Pancreas (tissue), 10 donors: ENCODE measurements at regions of chr6 and their contacts with region 1.

Region 1: DNA sequence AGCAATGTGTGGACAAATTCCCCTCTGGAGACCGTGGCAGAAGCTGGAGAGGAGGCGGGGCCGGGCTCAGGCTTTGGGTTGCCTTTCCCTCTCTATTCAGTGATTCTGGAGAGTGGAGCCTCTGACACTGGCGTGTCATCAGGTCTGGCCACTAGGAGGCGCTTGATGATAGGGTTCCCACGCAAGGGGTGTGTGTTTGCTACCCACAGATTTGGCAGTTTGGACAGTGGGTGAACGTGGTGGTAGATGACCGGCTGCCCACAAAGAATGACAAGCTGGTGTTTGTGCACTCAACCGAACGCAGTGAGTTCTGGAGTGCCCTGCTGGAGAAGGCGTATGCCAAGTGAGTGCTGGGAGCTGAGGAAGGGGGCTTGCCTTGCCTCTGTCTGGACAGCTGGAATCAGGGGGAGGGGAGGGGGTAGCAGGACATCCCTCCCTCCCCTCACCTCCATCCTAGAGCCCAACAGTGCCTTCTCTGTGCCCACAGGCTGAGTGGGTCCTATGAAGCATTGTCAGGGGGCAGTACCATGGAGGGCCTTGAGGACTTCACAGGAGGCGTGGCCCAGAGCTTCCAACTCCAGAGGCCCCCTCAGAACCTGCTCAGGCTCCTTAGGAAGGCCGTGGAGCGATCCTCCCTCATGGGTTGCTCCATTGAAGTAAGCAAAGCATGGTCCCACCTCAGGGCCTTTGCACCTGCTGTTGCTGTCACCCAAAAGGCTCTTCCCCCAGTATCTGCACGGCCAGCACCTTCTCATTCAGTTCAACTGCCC is 14.3 kb downstream of the CAPN11 start:
- DNase-seq: peak; percentile 74 to 91 (median 86)
- ATAC-seq: peak; percentile 92 to 99 (median 96)
- H3K4me3 ChIP-seq: no peak overlapping the region
- H3K27ac ChIP-seq: no peak overlapping the region
- H3K4me1 ChIP-seq: no peaks in the 10 kb centered on the region
- H3K27me3 ChIP-seq: no peaks in the 10 kb centered on the region
- CTCF ChIP-seq: peak; percentile 76 to 78 (median 78)

Region 2: DNA sequence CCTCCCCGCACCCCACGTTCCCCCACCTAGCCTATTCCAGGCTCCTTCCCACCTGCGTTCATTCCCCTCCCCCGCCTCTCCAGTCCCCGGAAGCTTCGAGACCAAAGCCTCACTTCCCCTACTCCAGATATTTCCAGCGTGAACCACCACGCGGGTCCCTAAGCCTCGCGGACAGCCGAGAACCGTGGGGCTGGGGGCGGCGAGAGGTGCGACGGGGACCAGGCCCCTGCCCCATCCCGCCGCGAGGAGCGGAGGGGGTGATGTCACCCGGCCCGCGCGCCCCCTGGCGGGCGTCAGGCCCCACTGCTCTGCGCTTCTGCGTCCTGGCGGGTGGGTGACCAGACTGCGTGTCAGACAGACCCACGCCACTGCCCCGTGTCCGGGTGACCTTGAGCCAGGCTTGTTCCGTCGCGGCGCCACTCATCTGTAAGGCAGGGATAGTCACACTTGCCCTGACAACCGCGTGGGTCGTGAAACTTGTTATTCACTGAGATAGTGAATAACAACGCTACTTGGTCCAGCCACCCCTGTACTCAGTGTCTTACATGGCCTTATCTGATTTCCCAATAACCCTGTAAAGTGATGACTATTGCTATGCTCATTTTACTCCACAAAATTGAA is 65.0 kb after region 1 on chr6:
- intact Hi-C with region 1: loop called in 2 of 3 experiments (anchors 5 kb)
- DNase-seq: peak; percentile 76 to 93 (median 88)
- ATAC-seq: peak; percentile 76 to 87 (median 82)
- H3K4me3 ChIP-seq: peak overlapping the region; percentile 10 to 58 (median 32)
- H3K27ac ChIP-seq: peak overlapping the region; percentile 91 to 97 (median 96)
- H3K4me1 ChIP-seq: peaks cover 14 to 20% (median 18%) of the 10 kb centered on the region in 3 donors
- H3K27me3 ChIP-seq: no peaks in the 10 kb centered on the region
- CTCF ChIP-seq: peak; percentile 90 to 97 (median 94)

Region 3: GRCh38 chr6:44338228-44339122 is 165.6 kb after region 1 on chr6:
- intact Hi-C with region 1: loop called in 1 of 3 experiments (anchors 10 kb)
- DNase-seq: peak; percentile 35 to 66 (median 46)
- ATAC-seq: peak; percentile 71 to 92 (median 88)
- H3K4me3 ChIP-seq: no peak overlapping the region
- H3K27ac ChIP-seq: peak overlapping the region in 1 of 4 donors; percentile 17
- H3K4me1 ChIP-seq: peaks cover 0 to 3% (median 0%) of the 10 kb centered on the region in 3 donors
- H3K27me3 ChIP-seq: no peaks in the 10 kb centered on the region
- CTCF ChIP-seq: peak; percentile 40 to 55 (median 48)